ENCODE measurements at regions of chr17 and their contacts with region 1.

Region 1: DNA sequence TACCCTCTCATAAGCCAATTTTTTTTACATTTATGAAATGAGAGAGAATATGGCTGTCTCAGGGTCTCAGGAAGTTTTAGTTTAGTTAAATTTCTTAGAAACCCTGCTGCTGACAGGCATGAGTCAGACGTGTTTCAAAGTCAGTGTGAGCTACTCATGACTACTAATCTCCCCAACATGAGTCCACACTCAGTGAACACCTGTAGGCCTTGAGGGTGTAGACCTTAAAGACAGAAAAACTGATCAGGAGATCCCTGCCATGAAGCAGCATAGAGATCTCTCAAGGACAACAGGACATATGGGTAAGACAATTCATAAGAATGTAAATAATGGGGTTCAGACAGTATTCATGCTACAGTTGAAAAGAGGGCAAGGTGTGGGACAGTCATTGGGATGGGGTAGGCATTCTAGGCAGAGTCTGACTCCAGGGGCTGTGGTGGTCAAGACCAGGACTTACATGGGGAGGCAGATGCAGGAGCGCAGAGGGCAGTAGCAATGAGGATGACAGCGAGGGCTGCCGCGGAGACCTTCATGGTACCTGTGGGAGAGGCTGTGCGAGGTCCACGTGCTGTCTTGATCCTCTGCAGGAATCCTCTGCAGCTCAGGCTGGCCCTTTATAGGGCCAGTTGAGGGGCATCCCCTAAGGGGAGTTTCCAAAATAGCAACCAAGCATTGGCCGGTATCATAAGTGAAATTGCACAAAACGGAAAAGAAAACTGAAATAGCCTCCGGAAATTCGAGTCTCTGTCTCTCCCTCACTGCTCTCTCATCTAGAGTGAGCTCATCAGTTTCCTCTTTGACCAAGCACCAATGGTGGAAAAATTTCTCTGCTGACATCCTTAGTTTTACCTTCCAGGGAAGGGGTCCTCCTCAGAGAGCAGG is at the start of gene CCL5:
- DNase-seq: peak; percentile 66
- H3K4me3 Mint-ChIP-seq: peak within 1 kb of the TSS; percentile 86
- H3K27ac Mint-ChIP-seq: peak within 1 kb of the TSS; percentile 99
- H3K4me1 Mint-ChIP-seq: peaks cover 57% of the 10 kb centered on the region
- H3K27me3 Mint-ChIP-seq: no peaks in the 10 kb centered on the region
- total RNA-seq, gene CCL5: 25.4 and 30.2 TPM in 2 replicates

Region 2: DNA sequence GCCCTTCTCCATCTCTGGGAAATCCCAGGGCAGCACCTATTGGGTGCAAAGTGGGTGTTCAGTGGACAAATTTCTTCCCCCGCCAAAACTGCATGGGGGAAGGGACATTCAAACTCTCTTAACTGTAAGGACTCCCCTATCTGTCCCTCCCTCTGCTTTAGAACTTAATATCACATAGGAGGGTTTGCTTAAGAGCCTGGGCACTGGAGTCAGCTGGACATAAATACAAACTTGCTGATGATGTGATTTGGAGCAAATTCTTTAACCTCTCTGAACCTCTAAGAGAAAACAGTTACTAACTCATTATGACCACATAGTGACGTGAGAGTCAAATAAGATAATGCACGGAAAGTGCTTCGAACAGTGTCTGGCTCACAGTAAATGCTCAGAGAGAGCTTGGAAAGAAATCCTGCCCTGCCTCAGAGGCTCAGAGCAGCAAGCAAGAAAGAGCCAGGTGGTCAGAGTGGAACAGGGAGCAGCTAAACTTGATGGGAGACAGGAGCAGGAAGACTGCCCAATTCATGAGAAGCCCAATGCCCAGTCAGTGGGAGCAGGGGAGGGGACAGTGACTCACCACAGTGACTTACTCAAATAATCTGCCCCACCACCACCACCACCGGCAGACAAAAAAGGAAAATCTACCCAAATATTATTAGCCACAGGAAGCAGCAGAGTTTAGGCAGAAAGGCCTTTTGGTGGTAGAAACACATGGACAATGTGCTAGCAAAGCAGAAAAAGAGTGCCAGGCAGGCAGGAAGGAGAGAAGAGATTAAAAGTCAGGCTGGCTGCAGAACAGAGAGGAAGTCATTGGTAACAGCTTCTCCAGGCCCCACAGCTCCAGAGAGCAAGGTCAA is 1493.1 kb before region 1 on chr17:
- intact Hi-C with region 1: loop called (anchors 10 kb)
- DNase-seq: no peak
- H3K4me3 Mint-ChIP-seq: peak overlapping the region; percentile 51
- H3K27ac Mint-ChIP-seq: peak overlapping the region; percentile 92
- H3K4me1 Mint-ChIP-seq: peaks cover 86% of the 10 kb centered on the region
- H3K27me3 Mint-ChIP-seq: peaks cover 12% of the 10 kb centered on the region

Region 3: DNA sequence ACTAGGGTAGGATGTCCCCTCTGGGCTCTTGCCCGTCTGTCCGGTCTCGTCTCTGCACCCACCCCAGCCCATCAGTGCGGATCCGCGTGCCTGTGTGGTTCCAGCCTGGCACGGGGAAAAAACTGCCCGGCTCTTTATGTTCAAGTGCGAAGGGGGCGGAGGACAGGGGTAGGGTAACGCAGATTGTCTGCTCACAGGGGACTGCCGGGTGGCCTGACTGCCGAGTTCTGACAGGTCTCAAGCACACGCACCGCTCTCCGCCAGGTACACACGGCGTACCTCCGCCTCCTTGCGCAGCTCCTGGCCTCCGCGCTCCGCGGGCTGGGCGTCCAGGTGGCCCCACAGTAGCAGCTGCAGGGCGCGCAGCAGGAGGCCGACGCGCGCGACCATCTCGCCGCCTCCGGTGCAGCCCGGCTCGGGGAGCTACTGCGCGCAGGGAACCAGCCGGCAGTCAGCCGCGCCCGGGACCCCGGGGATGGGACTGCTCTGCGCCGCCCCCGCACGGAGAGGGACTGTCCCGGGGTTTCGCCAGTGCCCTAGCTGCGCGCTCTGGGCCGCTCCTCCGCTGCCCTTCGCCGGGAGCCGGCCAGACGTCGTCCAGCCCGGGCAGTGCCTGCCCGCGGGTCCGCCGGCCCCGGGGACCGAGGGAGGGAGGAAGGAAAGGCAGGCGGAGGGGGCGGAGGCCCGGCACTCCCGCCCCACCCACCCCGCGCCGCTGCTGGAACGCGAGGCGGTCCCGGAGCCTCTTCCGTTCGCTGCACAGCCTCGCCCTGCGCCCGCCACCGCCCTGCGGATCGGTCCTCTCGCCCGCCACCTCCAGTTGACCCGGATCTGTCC is 84.8 kb before region 1 on chr17 and contains the start of gene MMP28:
- intact Hi-C with region 1: no loop called
- DNase-seq: peak; percentile 27
- H3K4me3 Mint-ChIP-seq: peak within 1 kb of the TSS; percentile 71
- H3K27ac Mint-ChIP-seq: no peak within 1 kb of the TSS
- H3K4me1 Mint-ChIP-seq: peaks cover 8% of the 10 kb centered on the region
- H3K27me3 Mint-ChIP-seq: peaks cover 70% of the 10 kb centered on the region
- total RNA-seq, gene MMP28: not detected in 2 replicates

Region 4: GRCh38 chr17:35889818-35890763 is 10.1 kb after region 1 on chr17:
- intact Hi-C with region 1: loop called (anchors 1 kb)
- DNase-seq: no peak
- H3K4me3 Mint-ChIP-seq: peak overlapping the region; percentile 66
- H3K27ac Mint-ChIP-seq: peak overlapping the region; percentile 94
- H3K4me1 Mint-ChIP-seq: peaks cover 56% of the 10 kb centered on the region
- H3K27me3 Mint-ChIP-seq: no peaks in the 10 kb centered on the region

Region 5: DNA sequence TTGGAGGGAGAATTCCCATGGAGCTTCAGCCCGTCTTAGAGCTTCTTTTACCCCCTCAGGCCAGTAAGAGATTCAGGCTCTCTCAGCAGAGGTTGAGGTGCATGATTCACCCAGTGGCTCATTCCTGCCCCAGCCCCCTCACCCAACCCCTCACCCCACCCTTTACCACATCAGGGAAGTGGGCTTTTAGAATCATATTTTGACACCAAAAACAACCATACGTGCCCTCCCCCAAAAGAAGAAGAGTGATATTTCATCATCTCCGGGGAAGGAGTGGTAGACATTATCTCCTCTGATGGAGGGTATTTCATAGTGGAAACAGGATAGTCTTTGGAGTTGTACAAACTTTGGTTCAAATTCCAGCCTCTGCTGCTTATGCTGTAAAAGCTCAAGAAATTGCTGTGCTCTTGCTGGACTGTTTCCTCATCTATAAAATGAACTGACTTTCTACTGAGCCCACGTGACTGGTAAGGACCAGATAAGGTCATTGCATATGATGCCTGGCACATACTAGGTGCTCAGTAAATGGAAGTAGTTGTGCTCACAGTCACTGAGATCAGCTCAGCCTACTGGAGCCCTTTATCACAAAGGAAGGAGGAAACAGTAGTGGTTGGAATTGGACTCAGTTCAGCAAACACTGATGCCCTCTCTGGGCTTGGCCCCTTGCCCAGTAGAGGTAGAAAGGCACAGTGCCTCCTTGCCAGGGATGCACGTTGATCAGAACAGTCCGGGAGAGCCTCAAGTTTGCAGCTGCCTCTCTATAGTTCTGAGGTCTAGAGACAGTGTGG is 18.5 kb after region 1 on chr17:
- intact Hi-C with region 1: loop called (anchors 2 kb)
- DNase-seq: no peak
- H3K4me3 Mint-ChIP-seq: no peak overlapping the region
- H3K27ac Mint-ChIP-seq: peak overlapping the region; percentile 36
- H3K4me1 Mint-ChIP-seq: peaks cover 55% of the 10 kb centered on the region
- H3K27me3 Mint-ChIP-seq: peaks cover 2% of the 10 kb centered on the region

Region 6: DNA sequence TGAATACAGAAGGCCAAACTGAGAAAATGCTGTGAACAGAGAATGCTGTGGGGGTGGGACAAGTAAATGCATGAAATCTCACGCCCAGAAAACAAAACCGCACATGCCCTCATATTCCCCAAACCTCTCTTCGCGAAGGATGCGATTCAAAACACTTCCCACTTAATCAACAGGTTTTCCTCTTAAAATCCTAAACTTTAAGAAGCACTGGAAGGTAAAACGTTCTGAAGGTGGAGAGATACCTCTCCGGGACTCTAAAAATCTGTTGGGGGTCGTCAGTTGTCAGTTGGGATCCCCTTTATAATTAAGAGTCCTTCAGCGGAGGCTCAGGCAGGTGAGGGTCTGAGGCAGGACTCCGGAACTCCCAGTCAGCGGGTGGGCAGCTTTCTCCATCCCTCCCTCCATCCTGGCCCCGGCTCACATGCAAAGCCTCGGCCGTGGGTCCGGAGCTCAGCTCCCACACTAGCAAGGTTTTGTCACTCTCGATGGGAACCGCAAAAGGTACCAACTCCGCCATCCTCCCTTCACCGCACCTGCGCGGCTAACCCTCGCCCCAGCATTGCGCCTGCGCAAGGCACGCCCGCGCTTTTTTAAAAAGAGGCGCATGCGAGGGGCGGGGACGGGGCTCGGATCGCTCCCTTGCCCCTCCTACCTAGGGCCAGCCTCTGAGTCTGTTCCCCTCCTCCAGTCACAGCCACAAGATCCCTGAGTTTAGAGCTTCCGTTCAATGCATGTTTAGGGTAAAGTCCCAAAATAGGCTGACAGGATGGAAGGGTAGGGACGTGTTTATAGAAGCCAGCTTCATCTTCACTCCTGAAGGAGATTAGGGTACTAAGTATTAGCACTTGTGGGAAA is 50.4 kb after region 1 on chr17 and contains the start of gene RDM1:
- intact Hi-C with region 1: loop called (anchors 1 kb)
- DNase-seq: peak; percentile 89
- H3K4me3 Mint-ChIP-seq: peak within 1 kb of the TSS; percentile 88
- H3K27ac Mint-ChIP-seq: peak within 1 kb of the TSS; percentile 90
- H3K4me1 Mint-ChIP-seq: peaks cover 29% of the 10 kb centered on the region
- H3K27me3 Mint-ChIP-seq: peaks cover 18% of the 10 kb centered on the region
- total RNA-seq, gene RDM1: 1.7 and 2.3 TPM in 2 replicates